Activated CD4-positive, alpha-beta T cell treated with anti-CD3 and anti-CD28 coated beads, Interleukin-2, amount 10 ng/mL, durations not matched to agents 7 days and 5 days (primary cell): ENCODE measurements at regions of chr2 and their contacts with region 1.

Region 1: DNA sequence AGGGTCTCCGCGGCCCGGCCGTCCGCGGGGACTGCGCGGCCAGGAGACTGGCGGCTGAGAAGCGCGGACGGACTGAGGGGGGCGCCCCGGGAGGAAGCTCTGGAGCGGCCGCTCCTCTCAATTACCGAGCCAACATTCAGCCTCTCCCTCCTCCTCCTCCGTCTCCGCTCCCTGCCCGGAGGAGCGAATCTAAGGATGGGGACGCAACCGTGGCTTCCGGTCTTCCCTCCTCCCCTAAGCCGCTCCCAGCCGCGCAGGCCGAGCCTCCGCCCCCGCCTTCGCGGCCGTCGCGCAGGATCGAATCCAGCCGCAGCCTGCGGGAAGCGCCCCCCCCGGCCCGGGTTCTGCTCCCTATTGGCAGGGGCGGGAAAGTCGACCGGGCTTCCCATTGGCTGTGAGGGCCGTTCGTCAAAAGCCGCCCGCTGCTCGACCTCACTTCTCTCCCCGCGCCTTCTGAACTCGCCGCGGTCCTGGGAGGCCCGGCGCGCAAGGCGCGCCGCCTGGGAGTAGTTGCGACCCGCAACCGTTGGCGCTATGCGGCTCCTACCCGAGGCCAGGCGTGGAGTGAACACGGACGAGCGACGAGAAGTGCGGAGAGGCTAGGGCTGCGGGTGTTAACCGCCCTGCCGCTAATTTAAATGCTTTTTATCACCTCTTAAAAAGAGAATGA is at the start of gene HNRNPLL:
- DNase-seq: peak; percentile 95
- H3K4me3 Mint-ChIP-seq: peak within 1 kb of the TSS; percentile 85
- H3K27ac Mint-ChIP-seq: peak within 1 kb of the TSS; percentile 95
- H3K4me1 Mint-ChIP-seq: peaks cover 49% of the 10 kb centered on the region
- H3K27me3 Mint-ChIP-seq: no peaks in the 10 kb centered on the region
- total RNA-seq, gene HNRNPLL: 54.2 to 55.8 TPM

Region 2: GRCh38 chr2:38626326-38627035 is 23.6 kb after region 1 on chr2:
- CTCF ChIA-PET with region 1: interaction called, 17 read pairs
- POLR2A ChIA-PET with region 1: no interaction called
- DNase-seq: peak; percentile 70
- H3K4me3 Mint-ChIP-seq: no peak overlapping the region
- H3K27ac Mint-ChIP-seq: peak overlapping the region; percentile 71
- H3K4me1 Mint-ChIP-seq: peaks cover 29% of the 10 kb centered on the region
- H3K27me3 Mint-ChIP-seq: no peaks in the 10 kb centered on the region

Region 3: GRCh38 chr2:38653715-38654527 is 51.1 kb after region 1 on chr2:
- CTCF ChIA-PET with region 1: interaction called, 15 read pairs
- POLR2A ChIA-PET with region 1: interaction called, 4 read pairs
- DNase-seq: peak; percentile 49
- H3K4me3 Mint-ChIP-seq: peak overlapping the region; percentile 16
- H3K27ac Mint-ChIP-seq: peak overlapping the region; percentile 90
- H3K4me1 Mint-ChIP-seq: peaks cover 64% of the 10 kb centered on the region
- H3K27me3 Mint-ChIP-seq: no peaks in the 10 kb centered on the region

Region 4: DNA sequence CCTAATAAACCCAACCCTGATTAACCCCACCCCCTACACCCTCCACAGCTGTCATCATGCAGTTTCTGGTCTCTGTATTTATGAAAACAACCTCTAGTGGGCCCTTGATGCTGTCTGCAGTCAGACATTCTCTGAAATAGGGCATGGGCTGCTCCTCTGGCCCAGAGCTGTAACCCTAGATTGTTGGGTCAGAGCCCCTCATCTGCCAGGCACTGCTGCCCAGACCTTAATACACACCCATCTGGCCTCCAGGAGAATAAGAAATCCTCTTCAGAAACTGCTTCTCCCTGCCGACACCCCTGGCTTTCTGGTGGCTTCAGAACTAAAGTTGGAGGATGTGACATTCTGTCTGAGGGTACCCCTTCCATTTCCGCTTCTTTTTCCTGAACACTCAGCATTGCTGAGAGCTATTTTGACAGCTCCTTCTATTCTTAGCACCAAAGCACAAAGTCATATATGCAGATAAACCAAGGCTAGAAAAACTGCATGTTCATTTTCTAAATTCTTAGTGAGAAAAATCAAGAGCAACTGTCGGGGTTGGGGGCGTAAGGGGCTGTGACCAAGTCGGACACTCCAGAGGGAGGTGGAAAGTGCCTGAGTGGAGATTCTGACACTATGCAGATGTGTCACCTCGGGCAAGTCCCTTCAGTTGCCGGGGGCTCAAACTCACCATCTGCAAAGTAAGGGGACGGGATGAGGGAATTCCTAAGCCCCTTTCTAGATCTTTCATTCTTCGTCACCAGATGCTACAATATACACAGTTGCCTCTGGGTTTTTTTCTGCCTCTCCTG is 119.6 kb after region 1 on chr2:
- CTCF ChIA-PET with region 1: interaction called, 15 read pairs
- POLR2A ChIA-PET with region 1: no interaction called
- DNase-seq: peak; percentile 27
- H3K4me3 Mint-ChIP-seq: peak overlapping the region; percentile 7
- H3K27ac Mint-ChIP-seq: peak overlapping the region; percentile 79
- H3K4me1 Mint-ChIP-seq: peaks cover 45% of the 10 kb centered on the region
- H3K27me3 Mint-ChIP-seq: no peaks in the 10 kb centered on the region